CD14-positive monocyte (primary cell): ENCODE measurements at regions of chr2 and their contacts with region 1.

Region 1: DNA sequence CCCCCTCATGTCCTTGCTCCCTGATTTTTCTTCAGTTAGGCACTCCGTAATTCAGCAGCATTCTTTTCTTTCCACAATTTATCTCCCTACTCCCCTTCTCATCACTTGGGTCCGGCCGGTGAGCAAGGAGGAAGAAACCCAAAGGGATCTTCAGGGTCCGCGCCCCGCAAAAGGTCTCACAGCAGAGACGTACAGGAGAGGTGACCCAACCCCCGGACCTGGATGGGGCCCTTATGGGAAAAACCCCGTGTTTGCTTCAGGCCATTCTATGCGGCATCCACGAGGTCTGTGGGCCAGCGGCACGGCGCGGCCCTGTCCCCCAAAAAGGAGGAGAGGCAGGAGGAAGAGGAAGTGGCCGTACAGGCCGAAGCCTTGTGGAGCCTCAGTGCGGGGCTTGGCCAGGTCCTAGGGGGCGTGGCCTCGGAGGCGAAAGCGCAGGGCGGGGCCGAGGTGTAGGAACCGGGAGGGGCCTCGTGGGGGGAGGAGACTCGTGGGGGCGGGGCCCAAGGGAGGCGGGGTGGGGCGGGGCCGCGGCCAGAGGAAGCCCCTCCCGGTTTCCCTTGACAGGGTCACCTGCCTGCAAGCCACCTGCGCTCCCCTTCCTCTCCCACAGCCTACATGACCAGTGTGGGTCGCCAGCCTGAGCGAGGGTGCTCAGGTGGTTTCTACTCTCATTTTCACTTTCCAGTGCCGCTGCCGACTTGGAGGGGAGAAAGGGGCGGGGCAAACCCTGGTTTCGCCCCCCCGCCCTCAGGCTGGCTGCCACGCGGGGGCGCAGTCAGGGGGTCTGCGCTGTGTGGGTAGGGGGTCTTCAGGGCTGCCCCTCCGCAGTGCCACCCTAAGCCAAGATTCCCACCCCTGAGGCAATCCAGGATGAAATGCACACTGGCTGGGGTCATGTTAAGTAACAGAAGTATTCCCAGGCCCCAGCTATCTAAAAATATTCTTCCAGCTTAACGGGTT is 156.4 kb upstream of the XPO1 start:
- DNase-seq: peak; percentile 93 to 95 (median 94)
- H3K4me3 ChIP-seq: peak overlapping the region; percentile 70 to 99 (median 95)
- H3K4me3 Mint-ChIP-seq: peak overlapping the region; percentile 87 to 96
- H3K27ac ChIP-seq: peak overlapping the region; percentile 55 to 95
- H3K27ac Mint-ChIP-seq: peak overlapping the region; percentile 94 to 98 (median 97)
- H3K4me1 ChIP-seq: peaks cover 13 to 14% of the 10 kb centered on the region in 2 donors
- H3K4me1 Mint-ChIP-seq: peaks cover 16% of the 10 kb centered on the region
- H3K27me3 ChIP-seq: no peaks in the 10 kb centered on the region
- H3K27me3 Mint-ChIP-seq: peaks cover 0 to 2% (median 1%) of the 10 kb centered on the region in 3 donors
- CTCF ChIP-seq: no peak

Region 2: GRCh38 chr2:61764035-61764800 is 69.6 kb after region 1 on chr2:
- intact Hi-C with region 1: loop called (anchors 2 to 5 kb)
- DNase-seq: peak; percentile 97 to 98 (median 98)
- H3K4me3 ChIP-seq: peak overlapping the region; percentile 50 to 83 (median 74)
- H3K4me3 Mint-ChIP-seq: peak overlapping the region; percentile 91 to 94
- H3K27ac ChIP-seq: peak overlapping the region; percentile 91 to 98
- H3K27ac Mint-ChIP-seq: peak overlapping the region; percentile 97 to 99 (median 98)
- H3K4me1 ChIP-seq: peaks cover 5 to 11% of the 10 kb centered on the region in 2 donors
- H3K4me1 Mint-ChIP-seq: peaks cover 6% of the 10 kb centered on the region
- H3K27me3 ChIP-seq: no peaks in the 10 kb centered on the region
- H3K27me3 Mint-ChIP-seq: peaks cover 0 to 8% (median 4%) of the 10 kb centered on the region in 3 donors
- CTCF ChIP-seq: no peak

Region 3: DNA sequence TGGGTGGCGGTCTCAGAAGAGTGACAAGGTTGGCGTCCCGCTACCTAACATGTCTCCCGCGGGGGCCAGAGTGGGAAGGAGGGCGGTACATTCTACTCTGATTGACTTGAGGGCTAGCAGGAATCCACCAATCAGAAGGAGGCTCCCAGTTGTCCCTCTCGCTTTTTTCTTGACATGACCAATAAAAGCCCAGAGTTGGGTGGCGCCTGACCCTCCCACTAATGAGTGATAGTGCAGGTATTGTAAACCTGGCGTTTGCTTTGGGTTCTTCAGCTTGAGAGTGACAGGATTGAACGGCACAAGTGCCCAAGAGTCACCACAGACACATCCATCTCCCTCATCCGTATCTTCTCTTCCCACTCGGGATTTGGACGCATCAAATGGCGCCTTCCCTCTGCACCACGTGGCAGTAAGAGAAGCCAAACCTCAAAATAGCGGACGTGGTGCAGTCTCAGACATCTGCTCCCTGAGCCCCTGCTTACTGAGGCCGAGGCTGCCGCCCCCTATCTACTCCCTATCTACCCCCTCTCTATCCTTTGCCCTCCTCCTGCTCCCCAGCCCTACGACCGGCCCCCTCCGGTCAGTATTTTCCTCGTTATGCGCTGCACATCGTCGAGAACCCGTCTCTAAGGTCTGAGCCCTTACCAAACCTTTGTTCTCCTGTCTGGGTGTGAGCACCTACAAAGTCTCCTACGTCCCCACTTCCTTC is 160.0 kb after region 1 on chr2:
- intact Hi-C with region 1: loop called (anchors 10 kb)
- DNase-seq: peak; percentile 83 to 89 (median 89)
- H3K4me3 ChIP-seq: peak overlapping the region; percentile 80 to 97 (median 93)
- H3K4me3 Mint-ChIP-seq: peak overlapping the region; percentile 98
- H3K27ac ChIP-seq: peak overlapping the region; percentile 21 to 32
- H3K27ac Mint-ChIP-seq: peak overlapping the region; percentile 76 to 89 (median 83)
- H3K4me1 ChIP-seq: peaks cover 19 to 20% of the 10 kb centered on the region in 2 donors
- H3K4me1 Mint-ChIP-seq: peaks cover 22% of the 10 kb centered on the region
- H3K27me3 ChIP-seq: no peaks in the 10 kb centered on the region
- H3K27me3 Mint-ChIP-seq: no peaks in the 10 kb centered on the region
- CTCF ChIP-seq: no peak